RWPE1 (cell line): ENCODE measurements at regions of chr9 and their contacts with region 1.

Region 1: GRCh38 chr9:128117613-128118471 is 9.7 kb downstream of the PTGES2 start:
- DNase-seq: peak; percentile 88
- H3K27ac ChIP-seq: peak overlapping the region; percentile 12
- CTCF ChIP-seq: peak; percentile 100

Region 2: DNA sequence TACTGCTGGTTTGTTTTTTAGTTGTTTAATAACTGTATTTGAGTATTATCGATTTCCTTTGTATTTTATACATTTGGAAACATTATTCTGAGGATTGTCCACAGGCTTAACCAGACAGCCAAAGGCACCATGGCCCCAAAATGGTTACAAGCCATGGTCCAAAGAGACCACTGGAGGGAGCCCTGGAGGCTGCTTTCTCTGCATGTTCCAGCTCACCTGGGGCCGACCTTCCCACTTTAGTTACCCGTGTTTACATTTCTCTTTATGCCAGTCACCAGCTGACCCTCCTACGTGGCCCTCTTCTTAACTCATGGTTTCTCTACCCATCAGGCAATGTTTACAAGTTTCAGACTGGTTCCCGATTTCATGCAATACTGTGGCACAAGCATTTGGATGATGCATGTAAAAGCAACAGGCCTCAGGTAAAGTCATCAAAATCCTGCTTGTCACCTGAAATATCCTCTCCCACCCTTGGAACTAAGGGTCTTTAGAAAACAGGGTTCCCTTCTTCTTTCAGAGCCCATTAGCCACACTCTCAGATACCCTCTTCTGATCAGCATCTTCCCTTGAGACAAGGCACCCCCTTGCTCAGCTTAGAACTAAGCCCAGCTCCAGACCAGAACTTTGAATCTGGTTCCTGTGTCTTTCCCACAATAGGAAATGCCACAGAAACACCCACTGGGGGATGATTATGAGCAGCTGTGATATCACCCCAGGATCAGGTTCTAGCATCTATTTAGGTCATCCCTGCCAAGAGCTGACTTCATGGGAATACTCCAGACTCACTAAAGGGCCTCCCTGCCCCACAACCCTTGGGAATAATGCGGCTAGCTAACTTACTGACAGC is 903.2 kb before region 1 on chr9:
- CTCF ChIA-PET with region 1: no interaction called
- POLR2A ChIA-PET with region 1: no interaction called
- DNase-seq: peak; percentile 92
- H3K27ac ChIP-seq: no peak overlapping the region
- CTCF ChIP-seq: peak; percentile 99

Region 3: DNA sequence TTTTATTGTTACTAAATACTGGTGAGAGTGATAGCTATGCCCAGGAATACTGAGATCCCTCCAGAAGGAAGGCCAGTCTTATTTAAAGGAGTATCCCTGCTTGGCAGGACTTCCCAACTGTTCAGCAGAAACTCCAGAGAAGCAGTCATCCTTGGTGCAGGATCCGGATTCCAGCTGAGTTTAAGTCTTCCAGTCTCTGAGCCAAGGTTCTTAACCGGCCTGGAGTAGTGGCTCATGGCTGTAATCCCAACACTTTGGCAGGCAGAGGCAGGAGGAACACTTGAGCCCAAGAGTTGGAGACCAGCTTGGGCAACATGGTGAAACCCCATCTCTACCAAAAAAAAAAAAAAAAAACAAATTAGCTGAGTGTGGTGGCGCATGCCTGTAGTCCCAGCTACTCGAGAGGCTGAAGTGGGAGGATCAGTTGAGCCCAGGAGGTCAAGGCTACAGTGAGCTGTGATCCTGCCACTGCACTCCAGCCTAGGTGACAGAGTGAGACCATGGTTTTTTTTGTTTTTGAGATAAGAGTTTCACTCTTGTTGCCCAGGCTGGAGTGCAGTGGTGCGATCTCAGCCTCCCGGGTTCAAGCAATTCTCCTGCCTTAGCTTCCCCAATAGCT is 58.4 kb before region 1 on chr9:
- CTCF ChIA-PET with region 1: interaction called, 10 read pairs
- POLR2A ChIA-PET with region 1: no interaction called
- DNase-seq: no peak
- H3K27ac ChIP-seq: no peak overlapping the region
- CTCF ChIP-seq: no peak

Region 4: DNA sequence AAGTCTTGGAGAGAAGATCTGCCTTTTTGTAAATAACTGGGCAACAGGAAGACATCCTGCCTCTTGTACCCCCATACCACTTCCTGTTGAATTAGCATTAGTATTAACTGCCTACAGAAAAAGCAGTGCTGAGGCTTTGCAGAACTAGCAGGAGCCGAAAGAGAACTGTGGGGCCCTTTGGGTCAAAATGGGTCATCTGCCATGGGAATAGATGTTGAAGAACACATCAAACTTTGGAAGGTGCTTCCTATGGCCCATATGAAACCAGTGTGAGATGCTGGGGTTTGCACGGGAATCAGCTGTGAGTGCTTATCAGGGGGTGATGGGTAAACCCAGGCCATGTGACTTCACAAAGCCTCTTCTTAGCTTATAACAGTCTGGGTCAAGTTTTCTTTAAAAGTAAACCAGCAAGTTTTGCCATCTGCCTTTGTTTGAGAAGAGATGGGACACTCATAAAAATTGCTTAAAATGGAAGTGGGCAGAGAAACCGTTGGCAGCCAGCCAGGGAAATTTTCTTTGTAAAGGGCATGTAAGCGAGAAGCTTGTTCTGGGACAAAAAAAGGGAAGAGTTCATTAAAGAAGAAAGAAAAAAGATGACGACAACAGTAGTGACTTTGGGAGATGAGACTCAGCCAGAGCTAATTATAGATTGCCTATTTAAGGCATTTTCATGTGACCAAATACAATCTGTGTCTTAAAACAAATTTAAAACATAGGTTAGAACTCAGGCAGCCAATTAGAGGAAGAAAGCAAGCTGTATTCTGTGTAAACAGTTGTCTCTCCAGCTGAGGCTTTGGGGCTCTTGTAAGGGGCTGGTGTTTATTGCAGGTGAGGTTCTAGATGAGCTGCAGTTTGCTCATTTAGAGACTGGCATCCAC is 45.5 kb before region 1 on chr9:
- CTCF ChIA-PET with region 1: interaction called, 12 read pairs
- POLR2A ChIA-PET with region 1: no interaction called
- DNase-seq: no peak
- H3K27ac ChIP-seq: peak overlapping the region; percentile 49; the same call in 1 of the 2 replicates
- CTCF ChIP-seq: no peak

Region 5: GRCh38 chr9:128088253-128088945 is 29.4 kb before region 1 on chr9:
- CTCF ChIA-PET with region 1: interaction called, 12 read pairs
- POLR2A ChIA-PET with region 1: no interaction called
- DNase-seq: no peak
- H3K27ac ChIP-seq: no peak overlapping the region
- CTCF ChIP-seq: no peak

Region 6: DNA sequence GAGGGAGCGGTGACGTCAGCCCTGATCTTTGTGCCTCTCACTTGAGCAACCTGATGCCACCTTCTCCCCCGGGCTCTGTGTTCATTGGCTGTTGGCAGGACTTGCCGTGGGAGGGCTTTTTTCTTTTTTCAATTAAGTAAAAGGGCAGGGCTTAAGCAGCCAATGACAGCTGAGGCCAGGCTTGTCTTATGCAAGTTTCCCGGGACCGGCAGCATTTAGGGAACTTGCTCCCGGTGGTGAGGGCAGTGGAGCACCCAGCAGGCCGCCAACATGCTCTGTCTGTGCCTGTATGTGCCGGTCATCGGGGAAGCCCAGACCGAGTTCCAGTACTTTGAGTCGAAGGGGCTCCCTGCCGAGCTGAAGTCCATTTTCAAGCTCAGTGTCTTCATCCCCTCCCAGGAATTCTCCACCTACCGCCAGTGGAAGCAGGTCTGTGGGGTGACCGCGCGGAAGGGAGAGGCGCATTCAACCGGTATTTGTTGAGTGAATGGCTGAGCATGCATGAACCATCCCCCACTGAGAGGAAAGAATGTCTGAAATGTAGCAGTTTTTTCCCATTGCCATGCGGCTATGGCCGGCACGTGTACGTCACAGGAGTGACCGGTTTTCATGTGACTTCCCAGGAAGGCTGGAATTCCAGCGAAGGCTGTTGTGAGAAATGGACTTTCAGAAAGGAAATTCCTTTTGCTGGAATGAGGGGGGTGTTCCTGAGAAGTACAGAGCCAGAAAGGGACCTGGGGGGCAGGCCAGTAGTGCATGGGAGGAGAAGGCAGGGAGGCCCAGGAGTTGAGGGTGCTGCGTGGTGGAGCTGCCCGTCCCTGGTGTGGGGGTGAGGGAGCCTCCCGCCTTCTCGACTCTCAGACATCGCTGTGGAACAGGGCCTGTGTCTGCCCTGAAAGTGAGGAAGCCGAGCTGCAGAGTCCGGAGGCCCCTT is 19.3 kb before region 1 on chr9:
- CTCF ChIA-PET with region 1: interaction called, 55 read pairs
- POLR2A ChIA-PET with region 1: no interaction called
- DNase-seq: peak; percentile 99
- H3K27ac ChIP-seq: peak overlapping the region; percentile 88
- CTCF ChIP-seq: no peak

Region 7: GRCh38 chr9:128103589-128103962 is 14.3 kb before region 1 on chr9:
- CTCF ChIA-PET with region 1: interaction called, 55 read pairs
- POLR2A ChIA-PET with region 1: no interaction called
- DNase-seq: no peak
- H3K27ac ChIP-seq: peak overlapping the region; percentile 88
- CTCF ChIP-seq: no peak

Region 8: DNA sequence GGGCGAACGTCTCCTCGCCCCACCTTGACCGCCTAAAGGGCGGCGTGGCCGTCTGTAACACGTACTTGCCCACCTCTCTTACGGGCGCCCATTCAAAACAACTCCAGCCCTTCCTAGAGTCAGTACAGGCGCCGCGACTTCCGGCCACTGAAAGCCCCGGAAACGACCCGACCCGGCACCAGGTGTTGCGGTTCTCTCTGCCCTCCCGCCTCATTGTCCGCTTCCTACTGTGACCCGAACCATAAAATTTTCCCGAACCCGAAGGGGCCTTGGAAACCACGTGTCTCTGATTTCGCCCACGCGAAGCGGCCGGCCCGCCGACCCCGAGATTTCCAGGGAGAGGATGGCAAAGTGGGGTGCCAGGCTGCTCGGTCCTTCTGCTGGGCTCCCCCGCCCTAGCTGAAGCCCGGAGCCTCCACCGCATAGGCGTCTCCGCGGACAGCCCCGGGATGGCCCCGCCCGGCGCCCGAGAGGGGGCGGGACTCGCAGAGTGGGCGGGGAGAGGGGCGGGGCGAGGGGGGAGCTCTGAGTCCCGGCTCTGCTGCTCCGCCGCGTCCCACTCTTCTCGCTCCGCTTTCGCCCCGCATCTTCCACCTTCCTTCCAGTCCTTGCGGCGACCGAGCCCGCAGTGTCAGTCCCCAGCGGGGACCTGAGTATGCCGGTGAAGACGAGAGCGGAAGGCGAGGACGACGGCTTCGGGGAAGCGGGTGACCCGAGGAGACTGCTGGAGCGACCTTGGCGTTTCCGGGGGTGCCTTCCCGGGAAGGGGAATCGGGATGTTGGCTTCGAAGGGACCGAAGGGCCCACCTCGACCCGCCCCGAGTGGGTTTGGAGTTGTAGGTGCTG is 10.4 kb after region 1 on chr9:
- CTCF ChIA-PET with region 1: interaction called, 40 read pairs
- POLR2A ChIA-PET with region 1: interaction called, 3 read pairs
- DNase-seq: peak; percentile 94
- H3K27ac ChIP-seq: peak overlapping the region; percentile 95
- CTCF ChIP-seq: no peak